WTC11 (cell line): ENCODE measurements at regions of chr3 and their contacts with region 1.

Region 1: DNA sequence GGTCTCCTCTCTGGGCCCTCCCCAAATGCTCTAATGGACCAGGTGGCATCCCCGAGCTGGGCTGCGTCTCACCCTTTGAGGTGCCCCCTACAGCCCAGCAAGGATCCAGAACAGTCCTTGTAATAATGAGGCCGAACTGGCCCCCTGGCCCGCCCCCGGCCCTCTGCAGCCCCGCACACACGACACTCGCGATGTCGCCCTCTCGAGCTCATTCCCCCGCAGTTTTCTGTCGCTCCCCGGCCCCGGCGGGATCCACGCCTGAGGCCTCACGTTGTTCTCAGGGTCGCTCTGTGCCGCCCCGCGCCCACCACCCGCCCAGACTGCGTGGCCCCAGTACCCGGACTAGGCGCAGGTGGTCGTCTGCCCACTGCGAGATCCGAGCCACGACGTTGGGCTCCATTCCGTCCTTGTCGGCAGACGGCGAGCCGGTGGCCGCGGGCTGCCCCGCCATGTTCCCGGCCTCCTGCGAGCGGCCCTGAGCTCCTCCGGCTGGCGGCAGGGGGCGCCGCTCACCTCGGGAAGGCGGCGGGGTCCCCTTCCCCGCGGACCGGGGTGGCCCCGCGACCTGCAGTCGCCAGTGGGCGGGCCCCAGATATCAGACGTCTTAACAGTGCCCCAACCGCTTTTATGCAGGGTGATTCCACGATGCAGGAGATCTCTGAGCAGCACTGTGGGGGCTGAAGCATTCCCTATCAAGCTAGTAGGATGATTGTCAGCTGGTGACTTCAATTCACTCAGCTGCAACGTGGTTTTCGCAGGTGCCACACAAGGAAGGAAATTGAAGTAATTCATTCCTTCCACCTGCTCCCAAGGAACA is at the start of gene C3orf33:
- DNase-seq: peak; percentile 73
- ATAC-seq: peak; percentile 95
- H3K4me3 Mint-ChIP-seq: peak within 1 kb of the TSS; percentile 83
- H3K27ac Mint-ChIP-seq: no peak within 1 kb of the TSS
- H3K4me1 Mint-ChIP-seq: no peaks in the 10 kb centered on the region
- H3K27me3 Mint-ChIP-seq: no peaks in the 10 kb centered on the region; the same call in 1 of the 2 replicates
- CTCF ChIP-seq: peak; percentile 80
- total RNA-seq, gene C3orf33: 2.8 to 3.0 TPM (median 3.0 TPM) in 3 replicates

Region 2: GRCh38 chr3:155714295-155714718 is 91.7 kb before region 1 on chr3:
- CTCF ChIA-PET with region 1: interaction called, 15 read pairs
- POLR2A ChIA-PET with region 1: no interaction called
- DNase-seq: peak; percentile 39
- ATAC-seq: peak; percentile 98
- H3K4me3 Mint-ChIP-seq: no peak overlapping the region
- H3K27ac Mint-ChIP-seq: no peak overlapping the region
- H3K4me1 Mint-ChIP-seq: peaks cover 19% of the 10 kb centered on the region
- H3K27me3 Mint-ChIP-seq: no peaks in the 10 kb centered on the region; the same call in 1 of the 2 replicates
- CTCF ChIP-seq: no peak

Region 3: GRCh38 chr3:155745795-155746550 is 60.0 kb before region 1 on chr3:
- CTCF ChIA-PET with region 1: interaction called, 27 read pairs
- POLR2A ChIA-PET with region 1: interaction called, 8 read pairs
- DNase-seq: peak; percentile 58
- ATAC-seq: peak; percentile 62
- H3K4me3 Mint-ChIP-seq: peak overlapping the region; percentile 71
- H3K27ac Mint-ChIP-seq: peak overlapping the region; percentile 92
- H3K4me1 Mint-ChIP-seq: peaks cover 60% of the 10 kb centered on the region
- H3K27me3 Mint-ChIP-seq: no peaks in the 10 kb centered on the region
- CTCF ChIP-seq: no peak

Region 4: GRCh38 chr3:155782390-155782997 is 23.5 kb before region 1 on chr3:
- CTCF ChIA-PET with region 1: interaction called, 10 read pairs
- POLR2A ChIA-PET with region 1: no interaction called
- DNase-seq: no peak
- ATAC-seq: no peak
- H3K4me3 Mint-ChIP-seq: no peak overlapping the region
- H3K27ac Mint-ChIP-seq: no peak overlapping the region
- H3K4me1 Mint-ChIP-seq: peaks cover 2% of the 10 kb centered on the region; the same call in 1 of the 2 replicates
- H3K27me3 Mint-ChIP-seq: no peaks in the 10 kb centered on the region
- CTCF ChIP-seq: no peak

Region 5: DNA sequence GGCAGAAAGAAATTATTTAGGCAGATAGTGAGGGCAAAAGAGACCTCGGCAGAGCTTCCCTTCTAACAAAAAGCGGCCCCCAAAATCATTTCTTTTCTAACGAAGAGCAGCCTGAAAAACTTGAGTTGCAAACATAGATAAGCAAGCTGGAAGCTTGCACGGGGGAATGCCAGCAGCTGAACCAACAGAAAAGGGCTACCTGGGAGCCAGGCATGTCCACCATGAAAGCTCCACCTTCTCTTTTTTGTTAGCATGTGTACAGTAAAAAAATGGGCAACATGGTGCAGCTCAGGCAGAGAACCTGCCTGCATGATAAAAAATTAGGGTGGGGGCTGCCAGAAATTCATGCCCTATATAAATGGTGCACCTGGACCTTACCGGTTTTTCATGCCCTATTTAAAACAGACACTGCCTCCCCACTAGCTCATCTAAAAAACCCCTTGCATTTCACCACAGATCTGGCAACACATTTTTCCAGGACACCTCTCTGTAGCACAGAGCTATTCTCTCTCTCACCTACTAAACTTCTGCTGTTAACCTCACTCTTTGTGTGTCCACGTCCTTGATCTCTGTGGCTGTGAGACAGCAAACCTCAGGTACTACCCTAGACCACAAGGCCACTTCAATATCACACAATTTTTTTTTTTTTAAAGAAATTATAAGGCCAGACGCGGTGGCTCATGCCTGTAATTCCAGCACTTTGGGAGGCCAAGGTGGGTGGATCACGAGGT is 29.5 kb after region 1 on chr3:
- CTCF ChIA-PET with region 1: interaction called, 15 read pairs
- POLR2A ChIA-PET with region 1: no interaction called
- DNase-seq: no peak
- ATAC-seq: no peak
- H3K4me3 Mint-ChIP-seq: no peak overlapping the region
- H3K27ac Mint-ChIP-seq: no peak overlapping the region; the same call in 1 of the 2 replicates
- H3K4me1 Mint-ChIP-seq: no peaks in the 10 kb centered on the region
- H3K27me3 Mint-ChIP-seq: no peaks in the 10 kb centered on the region
- CTCF ChIP-seq: no peak

Region 6: DNA sequence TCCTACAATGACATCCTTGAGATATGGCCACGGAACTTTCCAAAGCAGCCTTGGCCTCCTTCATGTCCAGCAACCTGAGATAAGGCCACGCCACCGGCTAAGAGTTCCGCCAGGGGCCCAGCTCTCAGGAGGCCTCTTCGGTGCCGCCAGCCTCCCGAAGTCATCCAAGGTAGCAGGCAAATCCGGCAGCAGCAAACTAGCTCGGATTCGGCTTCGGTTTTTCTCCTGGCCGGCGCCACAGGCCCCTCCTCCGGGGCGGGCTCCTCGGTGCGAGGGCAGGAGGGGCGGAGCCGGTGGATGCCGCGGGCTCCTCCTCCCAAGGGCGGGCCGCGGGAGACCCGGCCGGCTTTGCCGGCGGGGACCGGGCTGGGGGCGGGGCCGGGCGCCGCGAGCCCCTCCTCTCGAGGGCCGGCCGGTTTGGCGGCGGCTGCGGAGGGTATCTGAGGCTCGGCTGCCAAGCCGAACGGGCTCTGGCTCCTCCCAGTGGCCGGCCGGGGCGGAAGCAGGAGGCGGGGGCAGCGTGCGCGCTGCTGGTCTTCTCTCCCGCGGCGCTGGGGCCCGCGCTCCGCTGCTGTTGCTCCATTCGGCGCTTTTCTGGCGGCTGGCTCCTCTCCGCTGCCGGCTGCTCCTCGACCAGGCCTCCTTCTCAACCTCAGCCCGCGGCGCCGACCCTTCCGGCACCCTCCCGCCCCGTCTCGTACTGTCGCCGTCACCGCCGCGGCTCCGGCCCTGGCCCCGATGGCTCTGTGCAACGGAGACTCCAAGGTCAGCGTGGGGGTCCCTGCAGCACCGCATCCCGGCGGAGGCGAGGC is 64.3 kb after region 1 on chr3 and contains the start of gene GMPS:
- CTCF ChIA-PET with region 1: interaction called, 44 read pairs
- POLR2A ChIA-PET with region 1: interaction called, 12 read pairs
- DNase-seq: peak; percentile 96
- ATAC-seq: peak; percentile 92
- H3K4me3 Mint-ChIP-seq: peak within 1 kb of the TSS; percentile 96
- H3K27ac Mint-ChIP-seq: peak within 1 kb of the TSS; percentile 95
- H3K4me1 Mint-ChIP-seq: peaks cover 33% of the 10 kb centered on the region
- H3K27me3 Mint-ChIP-seq: no peaks in the 10 kb centered on the region
- CTCF ChIP-seq: no peak
- total RNA-seq, gene GMPS: 125 to 136 TPM (median 128 TPM) in 3 replicates